HepG2 (cell line): ENCODE measurements at regions of chr9 and their contacts with region 1.

Region 1: GRCh38 chr9:35116898-35117551 is 1.4 kb upstream of the ATOSB start:
- DNase-seq: peak; percentile 86
- ATAC-seq: peak; percentile 84
- H3K4me3 ChIP-seq: peak overlapping the region; percentile 78 to 96 (median 79)
- H3K27ac ChIP-seq: peak overlapping the region; percentile 56
- H3K4me1 ChIP-seq: peaks cover 30% of the 10 kb centered on the region
- H3K27me3 ChIP-seq: no peaks in the 10 kb centered on the region; a peak in 1 of 5 replicates
- CTCF ChIP-seq: peak; percentile 94
- EP300 ChIP-seq: no peak
- POLR2A ChIP-seq: no peak
- RAD21 ChIP-seq: peak; percentile 84

Region 2: DNA sequence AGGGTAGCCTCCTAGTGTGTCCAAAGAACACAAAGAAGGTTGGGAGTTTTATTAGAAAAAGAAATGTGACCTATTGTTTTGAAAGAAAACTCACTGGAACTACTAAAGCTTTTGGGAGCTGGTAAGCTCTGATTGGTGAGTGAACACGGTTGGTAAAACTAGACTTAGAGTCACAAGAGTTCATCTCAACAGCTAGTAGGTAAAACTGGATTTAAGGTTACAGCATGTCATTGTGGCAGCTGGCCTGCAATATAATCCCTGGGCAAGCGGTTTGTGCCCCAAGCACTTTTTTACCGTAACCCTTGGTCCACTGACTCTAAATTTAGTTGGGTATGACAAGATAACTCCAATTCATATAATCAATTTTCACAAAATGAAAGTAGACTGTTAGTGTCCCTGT is 1115.7 kb before region 1 on chr9:
- CTCF ChIA-PET with region 1: no interaction called
- POLR2A ChIA-PET with region 1: no interaction called
- in situ Hi-C with region 1: no loop called
- intact Hi-C with region 1: no loop called
- DNase-seq: no peak
- ATAC-seq: no peak
- H3K4me3 ChIP-seq: no peak overlapping the region
- H3K27ac ChIP-seq: no peak overlapping the region
- H3K4me1 ChIP-seq: no peaks in the 10 kb centered on the region
- H3K27me3 ChIP-seq: no peaks in the 10 kb centered on the region
- CTCF ChIP-seq: no peak
- EP300 ChIP-seq: no peak
- POLR2A ChIP-seq: no peak
- RAD21 ChIP-seq: no peak

Region 3: GRCh38 chr9:35089434-35089833 is 27.6 kb before region 1 on chr9:
- CTCF ChIA-PET with region 1: no interaction called
- POLR2A ChIA-PET with region 1: no interaction called
- in situ Hi-C with region 1: no loop called
- intact Hi-C with region 1: no loop called
- DNase-seq: no peak
- ATAC-seq: no peak
- H3K4me3 ChIP-seq: no peak overlapping the region
- H3K27ac ChIP-seq: no peak overlapping the region
- H3K4me1 ChIP-seq: peaks cover 2% of the 10 kb centered on the region; the same call in 1 of the 2 replicates
- H3K27me3 ChIP-seq: no peaks in the 10 kb centered on the region
- CTCF ChIP-seq: no peak
- EP300 ChIP-seq: no peak
- POLR2A ChIP-seq: no peak
- RAD21 ChIP-seq: no peak

Region 4: DNA sequence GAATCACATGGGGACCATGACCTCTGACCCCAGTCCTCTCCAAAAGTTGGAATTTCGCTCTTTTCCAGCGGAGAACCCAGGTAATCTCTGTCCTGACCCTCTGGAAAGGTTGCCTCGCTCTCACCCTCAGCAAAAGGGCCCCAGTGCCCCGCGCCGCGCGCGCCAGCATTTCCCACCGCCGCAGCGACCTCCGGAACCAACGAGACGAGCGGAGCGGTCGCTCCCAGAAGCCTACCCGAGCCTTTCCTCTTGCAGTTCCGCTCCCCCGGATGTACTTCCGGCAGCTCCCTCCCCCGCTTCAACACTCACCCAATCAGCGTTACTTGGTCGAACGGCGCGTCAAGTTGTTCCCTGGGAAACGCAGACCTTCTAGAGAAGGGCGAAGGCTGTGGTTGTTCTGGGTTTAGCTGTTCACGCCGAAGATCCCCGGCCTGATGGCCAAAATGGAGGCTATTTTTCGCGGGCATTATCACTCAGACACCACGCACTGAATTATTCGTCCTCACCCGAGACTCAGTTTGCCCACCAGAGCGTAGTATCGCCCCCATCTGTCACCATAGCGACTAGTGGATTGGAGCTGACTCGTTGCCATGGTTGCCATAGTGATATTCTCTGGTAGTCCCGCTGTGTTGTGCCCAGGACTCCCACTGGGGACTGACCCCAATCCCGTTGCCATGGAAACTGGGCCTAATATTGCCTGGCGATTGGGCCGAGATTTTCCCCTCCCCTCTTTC is 13.9 kb before region 1 on chr9 and contains the start of gene STOML2:
- CTCF ChIA-PET with region 1: no interaction called
- POLR2A ChIA-PET with region 1: interaction called, 34 read pairs
- in situ Hi-C with region 1: no loop called
- intact Hi-C with region 1: no loop called
- DNase-seq: peak; percentile 92
- ATAC-seq: peak; percentile 97
- H3K4me3 ChIP-seq: peak within 1 kb of the TSS; percentile 63 to 84 (median 69)
- H3K27ac ChIP-seq: peak within 1 kb of the TSS; percentile 74
- H3K4me1 ChIP-seq: peaks cover 19% of the 10 kb centered on the region
- H3K27me3 ChIP-seq: no peaks in the 10 kb centered on the region; a peak in 1 of 5 replicates
- CTCF ChIP-seq: peak; percentile 55
- EP300 ChIP-seq: peak in 1 of 2 experiments; percentile 49; a peak in 1 of 4 replicates
- POLR2A ChIP-seq: peak; percentile 75 to 90
- RAD21 ChIP-seq: peak; percentile 33; the same call in 1 of the 2 replicates
- total RNA-seq, gene STOML2: 250 and 305 TPM in 2 replicates

Region 5: DNA sequence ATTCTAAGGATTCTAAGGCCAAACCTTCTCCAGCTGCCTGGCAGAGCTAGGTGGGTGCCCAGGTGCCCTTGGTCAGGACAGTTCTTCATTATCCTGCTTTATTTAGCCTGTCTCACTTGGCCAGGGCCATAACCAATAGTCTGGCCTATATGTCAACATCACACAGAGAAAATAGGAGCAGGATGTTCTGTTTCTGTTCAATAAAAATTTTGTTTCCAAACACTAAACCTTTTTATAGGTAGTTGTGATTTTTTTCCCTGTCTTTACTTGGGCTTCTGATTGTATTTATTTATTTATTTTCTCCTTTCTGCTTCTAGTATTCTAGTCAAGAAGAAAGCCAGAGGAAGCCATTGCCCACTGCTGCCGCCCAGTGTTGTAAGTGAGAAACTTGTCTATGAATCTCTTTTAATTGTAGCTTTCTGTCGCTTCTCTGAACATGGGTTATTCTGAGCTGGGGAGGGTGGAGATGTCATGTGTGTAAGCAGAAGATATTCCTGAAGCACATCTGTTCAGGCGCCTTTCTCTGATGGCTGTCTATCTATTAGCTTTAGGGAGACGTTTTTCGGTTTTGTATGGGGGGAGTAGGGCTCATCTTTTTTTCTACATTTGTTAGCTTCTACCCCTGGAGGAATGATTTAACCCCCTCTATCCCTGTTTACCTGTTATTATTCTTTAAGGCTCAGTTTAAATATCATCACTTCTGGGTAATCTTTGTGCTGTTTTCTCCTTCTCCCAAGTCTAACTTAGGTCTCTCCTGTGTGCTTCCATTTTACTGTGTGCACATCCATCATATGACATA is 141.8 kb after region 1 on chr9:
- CTCF ChIA-PET with region 1: interaction called, 40 read pairs
- POLR2A ChIA-PET with region 1: interaction called, 8 read pairs
- in situ Hi-C with region 1: loop called (anchors 5 kb)
- intact Hi-C with region 1: loop called (anchors 1 kb)
- DNase-seq: peak; percentile 71
- ATAC-seq: peak; percentile 86
- H3K4me3 ChIP-seq: peak overlapping the region; percentile 44 to 63 (median 48)
- H3K27ac ChIP-seq: peak overlapping the region; percentile 81
- H3K4me1 ChIP-seq: peaks cover 23% of the 10 kb centered on the region
- H3K27me3 ChIP-seq: no peaks in the 10 kb centered on the region
- CTCF ChIP-seq: peak; percentile 77
- EP300 ChIP-seq: no peak
- POLR2A ChIP-seq: no peak
- RAD21 ChIP-seq: peak; percentile 60; the same call in 1 of the 2 replicates

Region 6: DNA sequence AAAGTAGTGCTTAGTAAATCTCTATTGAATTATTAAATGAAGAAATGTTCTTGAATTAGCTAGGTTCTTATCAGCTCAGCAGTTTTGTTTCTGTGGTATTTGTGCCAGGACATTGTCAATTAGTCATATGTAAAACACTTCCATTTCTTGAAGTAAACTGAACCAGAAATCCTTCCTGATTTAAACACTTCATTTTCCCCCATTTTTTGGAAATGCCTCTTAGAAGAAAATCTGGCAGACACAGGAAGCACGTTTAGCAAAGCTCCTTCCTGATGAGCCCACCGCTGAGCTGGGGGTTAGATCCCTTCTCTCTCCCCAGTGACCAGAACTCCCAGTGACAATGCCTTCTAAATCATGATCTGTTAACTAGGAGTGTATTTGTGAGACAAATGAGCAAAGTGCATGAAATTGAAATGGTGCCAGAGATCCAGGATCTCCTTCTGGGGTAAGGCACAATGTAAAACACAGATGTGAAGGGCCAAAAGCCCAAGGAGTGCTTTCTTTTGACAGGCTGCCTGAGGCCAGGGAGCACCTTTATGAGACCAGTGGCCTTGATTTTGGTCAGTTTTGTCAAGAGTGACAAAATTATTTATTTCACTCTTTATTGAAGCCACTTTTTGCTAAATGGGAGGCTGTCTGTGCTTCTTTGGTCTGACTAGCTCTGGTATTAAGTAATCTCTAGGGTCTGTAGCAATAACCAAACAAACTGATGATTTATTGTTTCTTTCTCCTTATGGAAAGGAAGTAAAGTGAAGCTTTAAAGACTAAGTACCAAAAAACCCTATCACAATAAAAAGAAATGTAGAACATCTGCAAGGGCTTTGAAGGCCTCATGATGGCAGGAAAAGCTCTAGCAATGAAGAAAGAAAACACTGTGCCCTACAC is 347.4 kb after region 1 on chr9:
- CTCF ChIA-PET with region 1: no interaction called
- POLR2A ChIA-PET with region 1: no interaction called
- in situ Hi-C with region 1: no loop called
- intact Hi-C with region 1: loop called (anchors 5 kb)
- DNase-seq: no peak
- ATAC-seq: no peak
- H3K4me3 ChIP-seq: no peak overlapping the region
- H3K27ac ChIP-seq: no peak overlapping the region
- H3K4me1 ChIP-seq: peaks cover 13% of the 10 kb centered on the region
- H3K27me3 ChIP-seq: peaks cover 0 to 9% of the 10 kb centered on the region in 2 experiments; a peak in 1 of 5 replicates
- CTCF ChIP-seq: no peak
- EP300 ChIP-seq: no peak
- POLR2A ChIP-seq: no peak
- RAD21 ChIP-seq: no peak

Region 7: DNA sequence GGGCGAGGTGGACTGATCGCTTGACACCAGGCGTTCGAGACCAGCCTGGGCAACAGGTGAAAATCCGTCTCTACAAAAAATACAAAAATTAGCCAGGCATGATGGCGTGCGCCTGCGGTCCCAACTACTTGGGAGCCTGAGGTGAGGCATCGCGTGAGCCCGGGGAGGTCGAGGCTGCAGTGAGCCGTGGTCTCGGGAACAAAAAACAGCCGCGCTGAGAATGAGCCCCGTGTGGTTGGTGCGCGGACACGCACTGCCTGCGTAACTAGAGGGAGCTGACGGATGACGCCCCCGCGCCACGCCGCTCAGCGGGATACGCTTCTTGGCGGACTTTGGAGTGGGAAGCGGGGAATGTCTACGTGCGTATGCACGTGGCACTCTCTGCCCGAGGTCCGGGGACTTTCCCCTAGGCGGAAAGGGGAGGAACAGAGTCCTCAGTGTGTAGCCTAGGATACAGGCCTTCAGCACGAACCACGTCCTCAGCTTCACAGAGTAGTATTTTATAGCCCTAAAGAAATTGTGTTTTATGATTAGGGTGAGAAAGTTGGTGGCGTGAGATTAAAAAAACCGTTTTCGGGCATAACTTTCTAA is 540.6 kb after region 1 on chr9 and contains the start of gene RMRP:
- CTCF ChIA-PET with region 1: no interaction called
- POLR2A ChIA-PET with region 1: no interaction called
- in situ Hi-C with region 1: loop called (anchors 10 kb)
- intact Hi-C with region 1: no loop called
- DNase-seq: peak; percentile 99
- ATAC-seq: peak; percentile 90
- H3K4me3 ChIP-seq: peak within 1 kb of the TSS; percentile 66 to 89 (median 85)
- H3K27ac ChIP-seq: peak within 1 kb of the TSS; percentile 100
- H3K4me1 ChIP-seq: peaks cover 71% of the 10 kb centered on the region
- H3K27me3 ChIP-seq: no peaks in the 10 kb centered on the region; a peak in 2 of 5 replicates
- CTCF ChIP-seq: peak; percentile 65
- EP300 ChIP-seq: peak in 1 of 2 experiments; percentile 57; a peak in 3 of 4 replicates
- POLR2A ChIP-seq: peak in 1 of 2 experiments; percentile 74; a peak in 1 of 4 replicates
- RAD21 ChIP-seq: peak; percentile 14; the same call in 1 of the 2 replicates
- total RNA-seq, gene RMRP: 1,047 and 4,025 TPM in 2 replicates